MCF 10A (cell line): ENCODE measurements at regions of chr1 and their contacts with region 1.

Region 1: DNA sequence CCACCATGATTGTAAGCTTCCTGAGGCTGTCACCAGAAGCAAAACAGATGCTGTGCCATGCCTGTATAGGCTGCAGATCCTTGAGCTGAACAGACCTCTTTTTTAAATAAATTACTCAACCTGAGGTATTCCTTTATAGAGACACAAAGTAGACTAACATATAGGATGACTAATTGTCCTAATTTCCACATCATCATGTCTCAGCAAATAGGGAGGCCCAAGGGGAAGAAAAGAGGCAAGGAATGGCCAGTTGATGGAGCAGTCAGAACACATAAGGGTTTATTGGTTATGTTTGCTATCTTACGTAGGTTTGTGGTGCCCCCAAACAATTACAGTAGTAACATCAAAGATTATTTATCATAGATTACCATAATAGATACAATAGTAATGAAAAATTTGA is 126.2 kb downstream of the RASAL2 start:
- DNase-seq: peak; percentile 76
- H3K4me3 Mint-ChIP-seq: no peak overlapping the region
- H3K27ac Mint-ChIP-seq: peak overlapping the region; percentile 17
- H3K4me1 Mint-ChIP-seq: peaks cover 36% of the 10 kb centered on the region
- H3K27me3 Mint-ChIP-seq: no peaks in the 10 kb centered on the region
- CTCF ChIP-seq: no peak

Region 2: GRCh38 chr1:178209935-178210334 is 10.2 kb before region 1 on chr1:
- CTCF ChIA-PET with region 1: interaction called, 12 read pairs
- POLR2A ChIA-PET with region 1: interaction called, 6 read pairs
- intact Hi-C with region 1: no loop called
- DNase-seq: no peak
- H3K4me3 Mint-ChIP-seq: no peak overlapping the region
- H3K27ac Mint-ChIP-seq: no peak overlapping the region
- H3K4me1 Mint-ChIP-seq: no peaks in the 10 kb centered on the region
- H3K27me3 Mint-ChIP-seq: no peaks in the 10 kb centered on the region
- CTCF ChIP-seq: no peak